ENCODE measurements at regions of chr9 and their contacts with region 1.

Region 1: GRCh38 chr9:76445976-76446375 is 13.0 kb upstream of the GCNT1 start:
- DNase-seq: no peak
- ATAC-seq: no peak

Region 2: GRCh38 chr9:76502746-76503145 is 56.8 kb after region 1 on chr9:
- intact Hi-C with region 1: no loop called
- DNase-seq: no peak
- ATAC-seq: no peak

Region 3: GRCh38 chr9:76704593-76705204 is 258.7 kb after region 1 on chr9:
- intact Hi-C with region 1: loop called (anchors 1 kb)
- DNase-seq: no peak
- ATAC-seq: peak; percentile 26

Measured in Right ventricle myocardium inferior (tissue), 1 donor.